ENCODE measurements at regions of chr3 and their contacts with region 1.

Region 1: DNA sequence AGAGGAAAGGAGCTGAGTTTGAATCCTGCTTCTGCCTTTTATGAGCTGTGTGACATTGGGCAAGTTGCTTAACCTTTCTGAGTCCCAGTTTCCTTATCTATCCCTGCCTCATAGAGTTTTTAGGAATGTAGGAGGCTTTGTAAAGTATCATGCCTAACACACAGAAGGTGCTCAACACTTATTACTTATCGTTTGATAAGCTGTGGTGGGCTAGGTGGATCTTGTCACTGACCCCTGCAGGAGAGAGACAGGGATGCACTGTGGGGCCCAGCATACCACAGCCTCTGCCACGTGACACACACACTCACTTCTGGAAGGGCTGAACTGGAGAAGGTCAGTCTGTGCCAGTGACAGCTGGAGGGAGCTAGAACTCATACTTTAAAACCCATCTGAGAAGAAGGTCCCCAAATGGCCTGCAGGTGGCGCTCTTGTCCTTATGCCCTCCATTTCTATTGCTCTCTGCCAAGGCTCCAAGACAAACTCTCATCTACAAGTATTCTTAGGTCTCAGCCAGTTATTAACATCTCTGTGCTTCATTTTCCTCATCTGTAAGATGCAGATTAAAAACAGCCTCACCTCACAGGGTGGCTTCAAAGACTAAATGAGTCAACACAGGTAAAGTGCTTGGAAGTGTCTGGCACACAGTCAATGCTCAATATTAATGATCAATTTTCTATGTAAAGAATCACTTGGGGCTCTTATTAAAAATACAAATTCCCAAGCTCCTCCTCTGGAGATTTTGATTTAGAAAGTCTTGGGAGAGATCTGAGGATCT is 57.5 kb upstream of the HACD2 start:
- DNase-seq: peak; percentile 77
- H3K4me3 Mint-ChIP-seq: no peak overlapping the region
- H3K27ac Mint-ChIP-seq: no peak overlapping the region
- H3K4me1 Mint-ChIP-seq: no peaks in the 10 kb centered on the region
- H3K27me3 Mint-ChIP-seq: no peaks in the 10 kb centered on the region

Region 2: GRCh38 chr3:123672429-123673146 is 30.2 kb after region 1 on chr3:
- CTCF ChIA-PET with region 1: interaction called, 10 read pairs
- POLR2A ChIA-PET with region 1: no interaction called
- intact Hi-C with region 1: no loop called
- DNase-seq: no peak
- H3K4me3 Mint-ChIP-seq: no peak overlapping the region
- H3K27ac Mint-ChIP-seq: no peak overlapping the region
- H3K4me1 Mint-ChIP-seq: no peaks in the 10 kb centered on the region
- H3K27me3 Mint-ChIP-seq: peaks cover 17% of the 10 kb centered on the region

Measured in activated CD4-positive, alpha-beta memory T cell treated with anti-CD3 and anti-CD28 coated beads for 36 hours (primary cell).